ENCODE measurements at regions of chr13 and their contacts with region 1.

Region 1: GRCh38 chr13:43085545-43085944 is 62.2 kb downstream of the DNAJC15 start:
- DNase-seq: peak in 3 of 5 donors; percentile 6 to 23 (median 22)
- H3K4me3 ChIP-seq: no peak overlapping the region
- H3K4me3 Mint-ChIP-seq: no peak overlapping the region
- H3K27ac ChIP-seq: no peak overlapping the region
- H3K27ac Mint-ChIP-seq: no peak overlapping the region
- H3K4me1 ChIP-seq: no peaks in the 10 kb centered on the region
- H3K4me1 Mint-ChIP-seq: peaks cover 0 to 18% (median 7%) of the 10 kb centered on the region in 4 donors
- H3K27me3 ChIP-seq: no peaks in the 10 kb centered on the region
- H3K27me3 Mint-ChIP-seq: no peaks in the 10 kb centered on the region

Region 2: GRCh38 chr13:42883771-42884467 is 201.6 kb before region 1 on chr13:
- CTCF ChIA-PET with region 1: no interaction called
- POLR2A ChIA-PET with region 1: no interaction called
- intact Hi-C with region 1: no loop called
- DNase-seq: no peak
- H3K4me3 ChIP-seq: no peak overlapping the region
- H3K4me3 Mint-ChIP-seq: no peak overlapping the region
- H3K27ac ChIP-seq: no peak overlapping the region
- H3K27ac Mint-ChIP-seq: peak overlapping the region in 1 of 7 donors; percentile 16
- H3K4me1 ChIP-seq: no peaks in the 10 kb centered on the region
- H3K4me1 Mint-ChIP-seq: peaks cover 2 to 14% (median 7%) of the 10 kb centered on the region in 4 donors
- H3K27me3 ChIP-seq: no peaks in the 10 kb centered on the region
- H3K27me3 Mint-ChIP-seq: no peaks in the 10 kb centered on the region

Region 3: GRCh38 chr13:43054803-43055802 is 30.4 kb before region 1 on chr13:
- CTCF ChIA-PET with region 1: interaction called, 10 read pairs
- POLR2A ChIA-PET with region 1: interaction called, 4 read pairs
- intact Hi-C with region 1: no loop called
- DNase-seq: peak in 4 of 5 donors; percentile 39 to 52 (median 46)
- H3K4me3 ChIP-seq: peak overlapping the region; percentile 62 to 78
- H3K4me3 Mint-ChIP-seq: no peak overlapping the region
- H3K27ac ChIP-seq: peak overlapping the region; percentile 85
- H3K27ac Mint-ChIP-seq: no peak overlapping the region
- H3K4me1 ChIP-seq: peaks cover 51% of the 10 kb centered on the region
- H3K4me1 Mint-ChIP-seq: peaks cover 6 to 30% (median 18%) of the 10 kb centered on the region in 4 donors
- H3K27me3 ChIP-seq: no peaks in the 10 kb centered on the region
- H3K27me3 Mint-ChIP-seq: no peaks in the 10 kb centered on the region

Region 4: DNA sequence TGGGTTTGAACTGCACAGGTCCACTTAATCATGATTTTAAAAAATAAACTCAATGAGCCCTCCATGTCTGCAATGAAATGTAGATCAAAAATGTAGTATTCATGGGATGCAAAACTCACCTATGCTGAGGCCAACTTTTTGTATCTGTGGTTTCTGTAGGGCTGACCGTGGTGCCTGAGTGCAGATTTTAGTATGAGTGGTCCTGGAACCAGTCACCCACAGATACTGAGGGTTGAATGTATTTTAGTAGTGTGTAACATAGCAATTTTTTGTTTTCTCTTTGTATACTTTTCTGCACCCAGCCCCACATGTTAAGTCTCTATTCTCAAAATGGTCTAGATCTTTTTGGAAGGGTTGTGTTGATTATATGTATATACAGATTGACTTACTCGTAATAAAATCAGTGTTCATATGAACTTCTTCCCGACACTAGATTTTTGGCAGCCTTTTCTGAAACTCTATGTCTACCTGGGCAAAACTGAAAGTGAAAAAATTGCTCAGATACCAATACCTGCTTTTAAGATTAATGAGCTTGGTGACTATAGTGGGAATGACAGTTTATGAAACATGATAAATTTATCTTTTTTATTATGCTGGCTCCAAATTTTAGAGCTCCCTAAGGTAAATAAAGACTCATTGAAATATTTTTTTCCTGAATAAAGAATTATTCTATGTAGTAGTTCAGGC is 10.6 kb before region 1 on chr13:
- CTCF ChIA-PET with region 1: interaction called, 28 read pairs
- POLR2A ChIA-PET with region 1: interaction called, 3 read pairs
- intact Hi-C with region 1: no loop called
- DNase-seq: no peak
- H3K4me3 ChIP-seq: no peak overlapping the region
- H3K4me3 Mint-ChIP-seq: peak overlapping the region; percentile 31 to 83 (median 66)
- H3K27ac ChIP-seq: no peak overlapping the region
- H3K27ac Mint-ChIP-seq: peak overlapping the region; percentile 7 to 87 (median 83)
- H3K4me1 ChIP-seq: peaks cover 27% of the 10 kb centered on the region
- H3K4me1 Mint-ChIP-seq: peaks cover 12 to 54% (median 40%) of the 10 kb centered on the region in 4 donors
- H3K27me3 ChIP-seq: no peaks in the 10 kb centered on the region
- H3K27me3 Mint-ChIP-seq: no peaks in the 10 kb centered on the region

Region 5: DNA sequence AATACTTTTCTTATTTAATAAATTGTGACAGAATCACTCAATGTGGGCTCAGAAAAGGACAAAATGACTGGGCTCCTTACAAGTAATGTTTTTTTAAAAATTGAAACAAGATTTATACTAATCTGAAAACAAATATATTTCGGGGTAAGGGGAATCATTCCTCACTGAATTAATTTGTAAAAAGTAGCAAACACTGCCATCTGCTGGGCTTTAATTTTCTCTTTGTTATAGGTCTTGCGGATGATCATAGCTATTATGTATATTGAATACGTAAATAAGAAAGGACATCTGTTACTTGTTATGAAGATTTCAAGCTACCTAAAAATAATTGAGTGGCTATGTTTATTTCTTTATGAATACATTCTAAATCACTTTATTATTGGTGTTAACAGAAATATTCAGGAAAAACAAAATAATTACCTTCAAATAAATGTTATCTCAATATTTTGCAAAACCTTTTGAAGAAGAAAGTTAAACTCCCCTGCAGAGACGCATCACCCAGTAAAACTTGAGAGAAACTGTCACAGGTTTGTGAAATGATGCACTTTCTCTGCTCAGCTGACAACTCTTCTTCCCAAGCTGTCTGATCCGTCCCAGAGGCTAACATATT is 719.0 kb after region 1 on chr13:
- CTCF ChIA-PET with region 1: interaction called, 16 read pairs
- POLR2A ChIA-PET with region 1: no interaction called
- intact Hi-C with region 1: loop called (anchors 1 kb)
- DNase-seq: peak in 4 of 5 donors; percentile 33 to 42 (median 38)
- H3K4me3 ChIP-seq: no peak overlapping the region
- H3K4me3 Mint-ChIP-seq: no peak overlapping the region
- H3K27ac ChIP-seq: no peak overlapping the region
- H3K27ac Mint-ChIP-seq: no peak overlapping the region
- H3K4me1 ChIP-seq: no peaks in the 10 kb centered on the region
- H3K4me1 Mint-ChIP-seq: peaks cover 0 to 3% (median 0%) of the 10 kb centered on the region in 4 donors
- H3K27me3 ChIP-seq: no peaks in the 10 kb centered on the region
- H3K27me3 Mint-ChIP-seq: peaks cover 3 to 8% of the 10 kb centered on the region in 2 donors